ENCODE measurements at regions of chr12 and their contacts with region 1.

Region 1: GRCh38 chr12:6752921-6753771 is at the start of gene MLF2:
- DNase-seq: peak; percentile 96
- ATAC-seq: peak; percentile 95
- H3K4me3 ChIP-seq: peak within 1 kb of the TSS; percentile 73 to 99 (median 97)
- H3K27ac ChIP-seq: peak within 1 kb of the TSS; percentile 96
- H3K4me1 ChIP-seq: peaks cover 28% of the 10 kb centered on the region
- H3K27me3 ChIP-seq: no peaks in the 10 kb centered on the region
- CTCF ChIP-seq: peak; percentile 33
- EP300 ChIP-seq: peak in 1 of 2 experiments; percentile 22; a peak in 1 of 4 replicates
- POLR2A ChIP-seq: peak; percentile 79 to 91
- RAD21 ChIP-seq: no peak; the same call in 1 of the 2 replicates
- total RNA-seq, gene MLF2: 88.1 and 95.8 TPM in 2 replicates

Region 2: DNA sequence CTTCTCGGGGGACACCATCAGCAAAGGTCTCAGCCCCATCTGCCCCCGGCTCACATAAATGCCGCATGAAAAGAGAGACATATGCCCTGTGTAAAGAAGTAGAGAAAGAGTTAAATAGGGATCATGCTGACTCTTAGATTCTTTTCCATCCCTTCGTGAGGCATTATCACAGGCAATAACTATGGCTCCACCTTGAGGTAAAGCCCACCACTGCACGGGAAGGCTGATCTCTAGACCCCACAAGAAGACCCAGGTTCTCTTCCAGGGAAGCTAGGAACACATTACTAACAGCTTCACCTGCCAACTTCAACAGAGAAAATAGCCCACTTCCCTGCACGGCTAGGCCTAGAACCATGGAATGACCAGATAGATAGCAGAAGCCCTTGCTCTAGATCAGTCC is 170.9 kb before region 1 on chr12:
- CTCF ChIA-PET with region 1: no interaction called
- POLR2A ChIA-PET with region 1: no interaction called
- in situ Hi-C with region 1: no loop called
- intact Hi-C with region 1: no loop called
- DNase-seq: no peak
- ATAC-seq: peak; percentile 68
- H3K4me3 ChIP-seq: no peak overlapping the region
- H3K27ac ChIP-seq: no peak overlapping the region
- H3K4me1 ChIP-seq: no peaks in the 10 kb centered on the region; the same call in 1 of the 2 replicates
- H3K27me3 ChIP-seq: no peaks in the 10 kb centered on the region; a peak in 1 of 5 replicates
- CTCF ChIP-seq: peak; percentile 35
- EP300 ChIP-seq: no peak
- POLR2A ChIP-seq: no peak
- RAD21 ChIP-seq: no peak

Region 3: DNA sequence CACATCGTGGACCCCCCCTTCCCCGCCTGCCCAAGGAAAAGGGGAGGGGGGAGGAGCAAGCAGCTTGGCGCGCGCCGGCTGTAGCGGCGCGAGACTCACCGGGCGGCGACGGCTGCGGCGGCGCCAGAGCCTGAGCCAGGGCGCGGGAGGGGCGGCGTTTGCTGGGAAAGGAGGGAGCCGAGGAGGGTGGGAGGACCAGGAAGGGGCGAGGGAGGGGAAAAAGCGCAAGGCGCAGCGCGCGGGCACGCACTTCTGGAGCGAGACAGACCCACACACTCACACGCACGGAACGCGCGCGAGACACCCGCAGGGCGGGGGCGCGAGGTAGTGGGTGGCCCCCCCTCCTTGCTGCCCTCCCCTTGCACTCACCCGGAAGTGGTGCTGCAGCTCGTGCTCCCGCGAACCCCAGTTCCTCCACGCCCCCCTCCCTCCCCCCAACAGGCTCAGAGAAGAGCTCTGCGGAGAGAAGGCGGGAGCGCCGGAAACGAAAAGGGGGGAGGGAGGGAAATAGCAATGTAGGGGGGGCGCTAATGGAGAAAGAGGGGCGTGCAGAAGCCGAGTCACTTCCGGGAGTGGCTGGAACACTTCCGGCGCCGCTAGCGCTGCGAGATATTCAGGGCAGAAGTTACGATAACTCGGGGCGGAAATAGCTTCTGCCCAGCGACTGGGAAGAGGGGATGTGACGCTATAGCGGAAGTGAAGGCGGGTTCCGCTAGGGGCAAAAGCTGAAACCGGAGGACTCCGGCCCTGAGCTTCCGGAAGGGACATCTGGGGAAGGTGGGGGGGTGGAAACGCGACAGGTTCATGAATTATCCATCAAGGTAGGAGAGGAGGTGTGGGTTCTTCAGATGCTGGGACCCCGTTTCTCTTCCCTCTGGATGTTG is 63.9 kb before region 1 on chr12 and contains the start of gene ZNF384:
- CTCF ChIA-PET with region 1: no interaction called
- POLR2A ChIA-PET with region 1: interaction called, 32 read pairs
- in situ Hi-C with region 1: no loop called
- intact Hi-C with region 1: loop called (anchors 2 kb)
- DNase-seq: peak; percentile 99
- ATAC-seq: peak; percentile 88
- H3K4me3 ChIP-seq: peak within 1 kb of the TSS; percentile 88 to 99 (median 89)
- H3K27ac ChIP-seq: peak within 1 kb of the TSS; percentile 98
- H3K4me1 ChIP-seq: peaks cover 51% of the 10 kb centered on the region
- H3K27me3 ChIP-seq: peaks cover 0 to 3% of the 10 kb centered on the region in 2 experiments; a peak in 3 of 5 replicates
- CTCF ChIP-seq: peak; percentile 31
- EP300 ChIP-seq: peak in 1 of 2 experiments; percentile 46; a peak in 2 of 4 replicates
- POLR2A ChIP-seq: peak; percentile 57 to 76
- RAD21 ChIP-seq: no peak
- total RNA-seq, gene ZNF384: 23.6 and 24.1 TPM in 2 replicates

Region 4: GRCh38 chr12:6735448-6736191 is 17.5 kb before region 1 on chr12:
- CTCF ChIA-PET with region 1: interaction called, 5 read pairs
- POLR2A ChIA-PET with region 1: interaction called, 4 read pairs
- in situ Hi-C with region 1: no loop called
- intact Hi-C with region 1: loop called (anchors 2 kb)
- DNase-seq: peak; percentile 46
- ATAC-seq: peak; percentile 99
- H3K4me3 ChIP-seq: no peak overlapping the region
- H3K27ac ChIP-seq: peak overlapping the region; percentile 3
- H3K4me1 ChIP-seq: peaks cover 11% of the 10 kb centered on the region
- H3K27me3 ChIP-seq: no peaks in the 10 kb centered on the region
- CTCF ChIP-seq: peak; percentile 84
- EP300 ChIP-seq: no peak
- POLR2A ChIP-seq: no peak
- RAD21 ChIP-seq: peak; percentile 78

Region 5: GRCh38 chr12:6773590-6774351 is 20.6 kb after region 1 on chr12:
- CTCF ChIA-PET with region 1: interaction called, 54 read pairs
- POLR2A ChIA-PET with region 1: interaction called, 162 read pairs
- in situ Hi-C with region 1: no loop called
- intact Hi-C with region 1: no loop called
- DNase-seq: no peak
- ATAC-seq: no peak
- H3K4me3 ChIP-seq: no peak overlapping the region
- H3K27ac ChIP-seq: no peak overlapping the region
- H3K4me1 ChIP-seq: peaks cover 85% of the 10 kb centered on the region
- H3K27me3 ChIP-seq: no peaks in the 10 kb centered on the region; a peak in 1 of 5 replicates
- CTCF ChIP-seq: no peak
- EP300 ChIP-seq: no peak
- POLR2A ChIP-seq: no peak
- RAD21 ChIP-seq: no peak

Region 6: GRCh38 chr12:6792522-6793201 is 39.5 kb after region 1 on chr12:
- CTCF ChIA-PET with region 1: no interaction called
- POLR2A ChIA-PET with region 1: interaction called, 23 read pairs
- in situ Hi-C with region 1: no loop called
- intact Hi-C with region 1: no loop called
- DNase-seq: peak; percentile 87
- ATAC-seq: peak; percentile 97
- H3K4me3 ChIP-seq: peak overlapping the region in 2 of 3 experiments; percentile 27 to 58; a peak in 4 of 6 replicates
- H3K27ac ChIP-seq: peak overlapping the region; percentile 74
- H3K4me1 ChIP-seq: peaks cover 59% of the 10 kb centered on the region
- H3K27me3 ChIP-seq: no peaks in the 10 kb centered on the region; a peak in 1 of 5 replicates
- CTCF ChIP-seq: peak; percentile 31; the same call in 1 of the 2 replicates
- EP300 ChIP-seq: peak in 1 of 2 experiments; percentile 78; a peak in 2 of 4 replicates
- POLR2A ChIP-seq: peak in 1 of 2 experiments; percentile 59; a peak in 2 of 4 replicates
- RAD21 ChIP-seq: no peak

Region 7: GRCh38 chr12:6873094-6874014 is 120.2 kb after region 1 on chr12 and contains the start of gene SPSB2:
- CTCF ChIA-PET with region 1: no interaction called
- POLR2A ChIA-PET with region 1: interaction called, 13 read pairs
- in situ Hi-C with region 1: no loop called
- intact Hi-C with region 1: no loop called
- DNase-seq: peak; percentile 94
- ATAC-seq: peak; percentile 81
- H3K4me3 ChIP-seq: peak within 1 kb of the TSS; percentile 74 to 95 (median 76)
- H3K27ac ChIP-seq: peak within 1 kb of the TSS; percentile 79
- H3K4me1 ChIP-seq: peaks cover 48% of the 10 kb centered on the region
- H3K27me3 ChIP-seq: no peaks in the 10 kb centered on the region; a peak in 1 of 5 replicates
- CTCF ChIP-seq: no peak
- EP300 ChIP-seq: 0 out of 4 replicates have a peak, but pooled peaks of 1 of the 2 experiments have one; percentile 5
- POLR2A ChIP-seq: no peak; a peak in 1 of 4 replicates
- RAD21 ChIP-seq: no peak
- total RNA-seq, gene SPSB2: 4.0 and 6.2 TPM in 2 replicates

Region 8: GRCh38 chr12:8681041-8681902 is 1928.1 kb after region 1 on chr12:
- CTCF ChIA-PET with region 1: no interaction called
- POLR2A ChIA-PET with region 1: no interaction called
- in situ Hi-C with region 1: no loop called
- intact Hi-C with region 1: no loop called
- DNase-seq: no peak
- ATAC-seq: no peak
- H3K4me3 ChIP-seq: no peak overlapping the region
- H3K27ac ChIP-seq: no peak overlapping the region
- H3K4me1 ChIP-seq: no peaks in the 10 kb centered on the region
- H3K27me3 ChIP-seq: 0 out of 5 replicates have a peak, but pooled peaks cover 0 to 2% of the 10 kb centered on the region in 2 experiments
- CTCF ChIP-seq: no peak
- EP300 ChIP-seq: no peak
- POLR2A ChIP-seq: no peak
- RAD21 ChIP-seq: no peak

Measured in HepG2 (cell line).